ENCODE measurements at regions of chr10 and their contacts with region 1.

Region 1: GRCh38 chr10:91006001-91006751 is 85.3 kb upstream of the ANKRD1 start:
- DNase-seq: peak; percentile 69
- H3K4me3 Mint-ChIP-seq: no peak overlapping the region
- H3K27ac Mint-ChIP-seq: peak overlapping the region; percentile 44
- H3K4me1 Mint-ChIP-seq: peaks cover 26% of the 10 kb centered on the region
- H3K27me3 Mint-ChIP-seq: peaks cover 13% of the 10 kb centered on the region

Region 2: GRCh38 chr10:90912174-90912573 is 94.0 kb before region 1 on chr10:
- CTCF ChIA-PET with region 1: interaction called, 11 read pairs
- POLR2A ChIA-PET with region 1: no interaction called
- DNase-seq: no peak
- H3K4me3 Mint-ChIP-seq: no peak overlapping the region
- H3K27ac Mint-ChIP-seq: no peak overlapping the region
- H3K4me1 Mint-ChIP-seq: peaks cover 2% of the 10 kb centered on the region
- H3K27me3 Mint-ChIP-seq: peaks cover 2% of the 10 kb centered on the region

Region 3: GRCh38 chr10:91034494-91035159 is 28.5 kb after region 1 on chr10:
- CTCF ChIA-PET with region 1: interaction called, 10 read pairs
- POLR2A ChIA-PET with region 1: interaction called, 8 read pairs
- DNase-seq: no peak
- H3K4me3 Mint-ChIP-seq: no peak overlapping the region
- H3K27ac Mint-ChIP-seq: peak overlapping the region; percentile 81
- H3K4me1 Mint-ChIP-seq: peaks cover 20% of the 10 kb centered on the region
- H3K27me3 Mint-ChIP-seq: peaks cover 2% of the 10 kb centered on the region

Region 4: DNA sequence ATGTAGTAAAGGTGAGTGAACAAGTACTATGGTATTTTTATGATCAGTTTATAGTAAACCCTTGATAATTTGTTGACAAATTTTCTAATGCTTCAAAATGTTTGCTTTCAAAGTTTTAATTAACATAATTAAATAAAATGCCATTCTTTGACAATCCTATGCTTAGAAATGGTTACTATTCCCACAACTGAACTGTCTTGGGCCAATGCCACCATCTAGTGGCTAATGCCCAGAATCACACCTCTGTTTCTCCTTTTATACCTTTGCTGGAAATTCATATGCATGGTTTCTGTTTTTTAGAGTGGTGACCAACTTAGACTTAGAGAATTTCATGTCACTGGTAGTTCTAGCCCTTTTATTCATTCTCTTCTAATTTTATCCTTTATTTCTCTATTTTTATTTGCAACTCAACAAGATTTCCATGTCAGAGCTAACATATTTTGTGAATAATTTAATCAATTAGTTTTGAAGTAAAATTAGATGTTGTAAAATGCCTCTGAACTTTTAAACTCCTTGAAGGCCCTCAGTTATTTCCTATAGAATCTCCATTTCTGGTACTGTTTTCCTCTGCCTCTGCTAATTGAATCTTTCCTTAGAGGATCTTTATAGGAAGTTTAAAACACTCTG is 245.4 kb after region 1 on chr10:
- CTCF ChIA-PET with region 1: interaction called, 133 read pairs
- POLR2A ChIA-PET with region 1: interaction called, 11 read pairs
- DNase-seq: peak; percentile 58
- H3K4me3 Mint-ChIP-seq: no peak overlapping the region
- H3K27ac Mint-ChIP-seq: no peak overlapping the region
- H3K4me1 Mint-ChIP-seq: peaks cover 5% of the 10 kb centered on the region
- H3K27me3 Mint-ChIP-seq: no peaks in the 10 kb centered on the region

Region 5: GRCh38 chr10:91298224-91298871 is 292.2 kb after region 1 on chr10:
- CTCF ChIA-PET with region 1: interaction called, 27 read pairs
- POLR2A ChIA-PET with region 1: interaction called, 3 read pairs
- DNase-seq: peak; percentile 85
- H3K4me3 Mint-ChIP-seq: peak overlapping the region; percentile 40
- H3K27ac Mint-ChIP-seq: peak overlapping the region; percentile 9
- H3K4me1 Mint-ChIP-seq: peaks cover 10% of the 10 kb centered on the region
- H3K27me3 Mint-ChIP-seq: peaks cover 15% of the 10 kb centered on the region

Measured in activated CD4-positive, alpha-beta memory T cell treated with anti-CD3 and anti-CD28 coated beads, Interleukin-2, amount 10 ng/mL, durations not matched to agents 7 days and 5 days (primary cell).